Transverse colon (tissue), 4 donors: ENCODE measurements at regions of chr2 and their contacts with region 1.

Region 1: DNA sequence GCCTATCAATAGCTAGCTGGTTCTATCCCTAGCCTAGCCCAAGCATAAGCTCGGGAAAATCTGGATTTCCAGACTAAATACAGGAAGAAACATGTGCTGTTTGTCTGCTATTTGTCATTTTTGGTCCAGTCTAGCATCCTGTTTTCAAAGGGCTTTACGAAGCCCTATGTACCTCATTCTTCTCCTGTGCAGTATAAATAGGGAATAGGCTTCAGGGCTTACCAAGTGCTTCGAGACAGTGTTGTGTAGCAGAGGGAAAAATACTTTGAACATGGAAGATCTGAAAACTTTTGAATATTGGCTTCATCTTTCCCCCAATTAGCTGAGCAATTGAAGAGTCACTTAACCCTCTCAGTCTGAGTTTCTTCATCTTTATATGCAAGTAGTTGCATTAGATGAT is 679.8 kb downstream of the TDRD15 start:
- DNase-seq: no peak
- H3K4me3 ChIP-seq: no peak overlapping the region
- H3K27ac ChIP-seq: no peak overlapping the region
- H3K4me1 ChIP-seq: no peaks in the 10 kb centered on the region
- H3K27me3 ChIP-seq: no peaks in the 10 kb centered on the region
- CTCF ChIP-seq: no peak
- EP300 ChIP-seq: no peak
- POLR2A ChIP-seq: no peak

Region 2: DNA sequence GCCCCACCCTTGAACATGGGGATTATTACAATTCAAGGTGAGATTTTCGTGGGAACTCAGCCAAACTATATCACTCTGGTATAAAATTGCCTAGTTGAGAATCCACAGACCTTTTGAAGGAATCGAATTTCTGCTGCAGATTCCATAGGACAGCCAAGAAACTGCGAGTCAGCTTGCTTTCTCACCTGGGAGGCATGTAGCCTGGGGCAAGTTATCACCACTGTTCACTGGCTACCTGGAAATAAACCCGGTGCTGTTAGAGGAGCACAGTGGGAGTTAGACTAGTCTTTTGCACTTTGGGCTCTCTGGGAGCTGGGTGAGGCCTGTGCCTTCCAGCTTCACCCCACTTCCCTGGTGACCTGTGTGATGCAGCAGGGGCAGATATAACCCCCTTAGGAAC is 363.7 kb after region 1 on chr2:
- in situ Hi-C with region 1: no loop called
- intact Hi-C with region 1: loop called (anchors 2 kb)
- DNase-seq: no peak
- H3K4me3 ChIP-seq: no peak overlapping the region
- H3K27ac ChIP-seq: no peak overlapping the region
- H3K4me1 ChIP-seq: no peaks in the 10 kb centered on the region
- H3K27me3 ChIP-seq: no peaks in the 10 kb centered on the region
- CTCF ChIP-seq: no peak
- EP300 ChIP-seq: no peak
- POLR2A ChIP-seq: no peak